ENCODE measurements at regions of chr4 and their contacts with region 1.

Region 1: DNA sequence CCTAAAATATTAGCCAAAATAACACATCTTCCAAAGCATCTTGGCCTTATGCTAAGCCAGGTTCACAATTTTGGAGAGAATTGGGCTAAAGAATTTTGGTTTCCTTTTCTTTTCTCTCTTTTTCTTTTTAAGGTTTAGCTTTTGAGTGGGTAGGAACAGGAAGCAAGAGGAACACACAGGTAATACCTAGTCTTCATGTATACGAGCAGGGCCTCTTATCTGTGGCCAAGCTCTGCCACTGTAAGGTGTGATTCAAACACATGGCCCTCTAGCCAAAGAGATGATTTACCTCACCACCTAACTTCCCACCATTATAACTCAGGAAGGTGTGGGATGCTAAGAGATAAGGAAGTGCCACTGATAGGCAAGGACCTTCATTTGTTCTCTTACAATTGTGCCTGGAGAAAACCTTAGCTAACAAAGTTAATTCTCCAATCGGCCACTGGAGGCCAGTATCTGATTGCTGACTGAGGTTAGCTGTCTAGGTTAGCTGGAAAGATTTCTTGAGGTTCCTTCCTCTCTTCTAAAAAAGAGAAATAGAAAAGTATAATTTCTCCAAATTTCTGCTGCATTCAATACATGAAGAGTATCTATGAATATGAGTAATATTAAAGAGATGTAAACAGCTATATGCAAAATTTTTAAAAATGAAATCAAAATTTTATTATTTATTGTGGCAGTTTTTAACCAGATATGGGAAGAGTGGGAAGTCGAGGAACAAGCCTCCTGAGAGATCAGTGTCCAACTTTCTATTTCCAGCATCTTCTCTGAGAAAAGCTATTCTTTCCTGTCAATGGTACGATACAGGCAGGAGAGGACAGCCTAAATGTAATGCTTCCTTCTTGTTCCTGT is 30.1 kb upstream of the BBS7 start:
- DNase-seq: no peak
- ATAC-seq: peak; percentile 60
- H3K4me3 ChIP-seq: no peak overlapping the region
- H3K27ac ChIP-seq: no peak overlapping the region
- H3K4me1 ChIP-seq: no peaks in the 10 kb centered on the region
- H3K27me3 ChIP-seq: no peaks in the 10 kb centered on the region

Region 2: DNA sequence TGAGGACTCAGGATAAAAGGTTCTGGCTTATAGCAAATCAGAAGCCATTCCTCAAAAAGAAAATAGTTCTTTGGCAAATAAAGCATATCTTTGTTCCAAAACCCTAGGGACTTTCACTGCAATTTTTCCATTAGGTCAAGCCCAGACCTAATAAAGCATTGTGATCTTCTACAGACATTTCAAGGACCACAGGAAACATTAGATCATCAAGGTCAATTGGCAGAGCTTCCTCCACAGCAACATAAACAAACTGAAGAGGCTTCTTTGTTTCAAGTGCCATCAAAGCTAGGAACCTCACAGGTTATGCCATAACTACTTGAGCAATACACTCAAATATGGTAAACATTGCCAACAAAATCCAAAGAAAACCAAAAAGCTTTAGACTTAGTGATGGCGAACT is 348.5 kb before region 1 on chr4:
- intact Hi-C with region 1: no loop called
- DNase-seq: no peak
- ATAC-seq: no peak
- H3K4me3 ChIP-seq: no peak overlapping the region
- H3K27ac ChIP-seq: no peak overlapping the region
- H3K4me1 ChIP-seq: no peaks in the 10 kb centered on the region
- H3K27me3 ChIP-seq: peaks cover 0 to 3% of the 10 kb centered on the region in 2 donors

Region 3: GRCh38 chr4:122577808-122578781 is 677.7 kb after region 1 on chr4:
- intact Hi-C with region 1: loop called in 1 of 2 experiments (anchors 2 kb)
- DNase-seq: no peak
- ATAC-seq: no peak
- H3K4me3 ChIP-seq: no peak overlapping the region
- H3K27ac ChIP-seq: no peak overlapping the region
- H3K4me1 ChIP-seq: no peaks in the 10 kb centered on the region
- H3K27me3 ChIP-seq: no peaks in the 10 kb centered on the region

Measured in aorta (tissue), 5 donors.